ENCODE measurements at regions of chr11 and their contacts with region 1.

Region 1: DNA sequence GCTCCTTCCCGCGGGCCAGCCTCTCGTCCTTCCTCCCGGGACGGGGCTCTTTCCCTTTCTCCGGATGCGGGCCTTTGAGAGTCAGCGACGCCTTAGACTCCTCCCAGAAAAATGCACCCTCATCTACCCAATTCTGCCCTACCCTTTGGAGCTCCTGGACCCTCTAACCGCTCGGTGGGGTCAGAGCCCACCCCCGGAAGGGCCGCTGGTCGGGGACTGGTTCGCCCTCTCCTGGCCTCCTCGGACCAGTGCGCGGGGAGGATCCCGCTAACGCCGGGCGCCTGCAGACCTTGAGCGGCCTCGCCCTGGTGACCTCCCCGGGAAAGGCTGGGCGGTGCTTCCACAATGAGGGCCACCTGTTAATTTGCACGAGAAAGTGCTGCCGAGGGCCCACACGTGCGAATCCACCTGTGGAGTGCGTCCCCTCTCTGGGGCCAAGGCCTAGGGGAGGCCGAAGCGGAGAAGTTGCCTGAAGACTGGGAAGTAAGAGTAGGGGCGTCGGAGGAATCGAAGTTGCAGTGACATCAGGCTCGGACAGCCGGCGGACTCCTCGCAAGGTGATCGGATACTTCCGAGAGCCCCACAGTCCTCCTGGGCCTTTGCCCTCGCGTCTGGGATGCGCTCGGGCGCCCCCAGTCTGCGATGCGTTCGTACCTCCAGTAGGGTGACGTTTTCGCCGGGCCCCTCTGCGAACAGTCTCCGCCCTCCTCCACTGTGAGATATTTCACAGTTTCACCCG is 61.5 kb downstream of the ENDOD1 start:
- DNase-seq: peak; percentile 80 to 86
- ATAC-seq: peak; percentile 94 to 97
- H3K4me3 ChIP-seq: peak overlapping the region; percentile 59
- H3K27ac ChIP-seq: peak overlapping the region; percentile 81 to 91
- H3K4me1 ChIP-seq: peaks cover 12% of the 10 kb centered on the region; the same call in 2 of the 3 replicates
- CTCF ChIP-seq: peak; percentile 75; the same call in 2 of the 3 replicates
- EP300 ChIP-seq: no peak
- POLR2A ChIP-seq: peak; percentile 47
- RAD21 ChIP-seq: no peak; a peak in 2 of 5 replicates

Region 2: GRCh38 chr11:95163106-95163505 is 12.0 kb after region 1 on chr11:
- CTCF ChIA-PET with region 1: interaction called, 10 read pairs
- POLR2A ChIA-PET with region 1: no interaction called
- DNase-seq: no peak
- ATAC-seq: no peak
- H3K4me3 ChIP-seq: no peak overlapping the region
- H3K27ac ChIP-seq: no peak overlapping the region
- H3K4me1 ChIP-seq: no peaks in the 10 kb centered on the region
- CTCF ChIP-seq: no peak
- EP300 ChIP-seq: no peak
- POLR2A ChIP-seq: no peak
- RAD21 ChIP-seq: no peak

Region 3: GRCh38 chr11:95182397-95182796 is 31.3 kb after region 1 on chr11:
- CTCF ChIA-PET with region 1: no interaction called
- POLR2A ChIA-PET with region 1: no interaction called
- DNase-seq: no peak
- ATAC-seq: no peak
- H3K4me3 ChIP-seq: no peak overlapping the region
- H3K27ac ChIP-seq: no peak overlapping the region
- H3K4me1 ChIP-seq: no peaks in the 10 kb centered on the region
- CTCF ChIP-seq: no peak
- EP300 ChIP-seq: no peak
- POLR2A ChIP-seq: no peak
- RAD21 ChIP-seq: no peak

Region 4: DNA sequence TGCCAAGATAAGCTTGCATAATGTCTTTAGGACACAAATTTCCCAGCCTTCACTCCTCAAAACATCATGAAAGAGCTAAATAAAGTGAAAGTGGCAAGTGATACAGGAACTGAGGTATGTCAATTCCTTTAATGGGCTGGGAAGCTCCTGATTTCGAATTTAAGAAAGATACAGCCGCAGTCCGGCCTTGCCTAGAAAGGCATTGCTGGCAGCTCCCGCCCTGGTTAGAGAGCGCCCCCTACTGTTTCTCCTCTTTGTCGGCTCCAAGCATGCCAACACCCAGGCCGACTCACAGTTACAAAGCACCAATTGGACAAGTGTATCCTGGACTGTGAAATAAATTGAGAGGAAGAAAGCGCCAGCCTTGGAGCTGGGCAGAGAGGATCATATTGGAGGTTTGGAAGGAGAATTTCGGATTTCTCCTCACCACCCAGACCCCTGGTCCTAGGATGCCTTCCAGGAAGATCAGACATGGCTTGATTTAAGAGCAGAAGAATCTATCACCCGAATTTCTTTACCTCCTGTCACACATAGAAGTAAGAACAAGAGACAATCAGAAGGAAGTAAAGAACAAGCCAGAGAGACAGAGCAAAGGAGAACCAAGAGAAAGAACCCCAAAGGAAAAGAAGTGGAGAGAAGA is 554.5 kb after region 1 on chr11:
- CTCF ChIA-PET with region 1: interaction called, 174 read pairs
- POLR2A ChIA-PET with region 1: no interaction called
- DNase-seq: peak; percentile 28 to 78
- ATAC-seq: peak; percentile 97 to 99
- H3K4me3 ChIP-seq: no peak overlapping the region
- H3K27ac ChIP-seq: no peak overlapping the region
- H3K4me1 ChIP-seq: no peaks in the 10 kb centered on the region
- CTCF ChIP-seq: peak; percentile 67
- EP300 ChIP-seq: no peak
- POLR2A ChIP-seq: no peak
- RAD21 ChIP-seq: peak; percentile 87 to 89

Region 5: DNA sequence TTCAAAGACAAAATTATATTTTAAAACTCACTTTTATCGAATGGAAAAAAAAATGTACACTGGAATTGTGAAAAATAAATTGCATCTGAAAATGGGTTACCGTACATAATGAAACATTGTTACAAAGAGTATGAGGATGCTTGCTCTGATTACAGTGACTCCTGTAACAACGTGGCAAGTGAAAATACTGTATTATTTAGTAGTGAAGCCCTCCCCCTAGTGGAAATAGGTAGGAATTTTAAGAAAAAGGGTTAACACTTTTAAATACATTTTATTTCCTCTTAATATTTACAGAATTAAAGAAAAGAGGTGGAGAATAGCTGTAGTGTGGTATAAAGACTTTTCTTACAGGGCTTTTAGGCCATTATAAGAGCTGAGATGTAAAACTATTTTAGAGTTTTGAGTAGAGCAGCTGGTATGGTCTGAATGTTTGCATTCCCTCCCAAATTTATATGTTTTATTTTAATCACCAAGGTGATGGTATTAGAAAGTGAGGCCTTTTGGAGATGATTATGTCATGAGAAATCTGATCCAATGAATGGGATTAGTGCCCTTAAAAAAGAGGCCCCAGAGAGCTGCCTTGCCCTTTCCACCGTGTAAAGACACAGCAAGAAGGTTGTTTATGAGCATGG is 613.3 kb after region 1 on chr11:
- CTCF ChIA-PET with region 1: interaction called, 105 read pairs
- POLR2A ChIA-PET with region 1: no interaction called
- DNase-seq: peak; percentile 13 to 45
- ATAC-seq: peak; percentile 59 to 76; a peak in 4 of 6 replicates
- H3K4me3 ChIP-seq: no peak overlapping the region
- H3K27ac ChIP-seq: no peak overlapping the region
- H3K4me1 ChIP-seq: peaks cover 6% of the 10 kb centered on the region; the same call in 1 of the 3 replicates
- CTCF ChIP-seq: peak; percentile 64
- EP300 ChIP-seq: no peak
- POLR2A ChIP-seq: no peak
- RAD21 ChIP-seq: peak; percentile 68 to 77